AG04450 (cell line): ENCODE measurements at regions of chr4 and their contacts with region 1.

Region 1: DNA sequence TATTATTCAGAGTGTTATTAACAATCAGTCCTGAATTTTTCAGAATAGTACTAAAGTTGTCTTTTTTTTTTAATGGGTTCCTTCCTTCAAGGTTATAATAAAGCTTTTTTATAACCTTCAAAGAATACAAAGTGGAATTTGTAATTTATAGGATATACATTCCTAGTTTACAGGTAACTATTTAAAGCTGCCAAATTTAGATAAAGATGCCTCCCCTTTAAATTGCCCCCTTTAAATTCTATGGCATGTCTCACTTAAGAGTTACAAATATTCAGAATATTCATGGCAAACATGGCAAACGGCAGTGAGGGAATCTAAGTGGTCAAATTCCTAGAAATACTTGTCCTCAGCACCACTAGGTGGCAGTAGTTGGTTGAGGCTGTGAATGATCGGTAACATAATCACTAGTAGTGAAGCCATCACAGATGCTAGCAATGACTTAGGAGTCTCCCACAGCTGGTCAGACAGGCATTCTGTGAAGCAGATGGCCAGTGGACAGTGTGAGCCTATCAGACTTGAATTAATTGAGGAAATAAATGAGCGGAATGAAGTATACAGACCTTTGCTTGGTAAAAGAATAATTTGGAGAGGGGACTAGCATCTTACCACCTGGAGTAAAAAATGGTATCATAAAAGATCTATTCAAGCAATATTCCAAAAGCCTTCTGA is 86.4 kb downstream of the CBR4 start:
- DNase-seq: peak; percentile 76
- H3K4me3 ChIP-seq: no peak overlapping the region
- H3K27ac ChIP-seq: no peak overlapping the region
- H3K27me3 ChIP-seq: no peaks in the 10 kb centered on the region
- CTCF ChIP-seq: peak; percentile 87

Region 2: GRCh38 chr4:168585168-168586091 is 338.2 kb before region 1 on chr4:
- CTCF ChIA-PET with region 1: interaction called, 45 read pairs
- POLR2A ChIA-PET with region 1: no interaction called
- DNase-seq: peak; percentile 52
- H3K4me3 ChIP-seq: no peak overlapping the region
- H3K27ac ChIP-seq: no peak overlapping the region
- H3K27me3 ChIP-seq: no peaks in the 10 kb centered on the region
- CTCF ChIP-seq: peak; percentile 85

Region 3: GRCh38 chr4:168666531-168666930 is 257.1 kb before region 1 on chr4:
- CTCF ChIA-PET with region 1: no interaction called
- POLR2A ChIA-PET with region 1: no interaction called
- DNase-seq: no peak
- H3K4me3 ChIP-seq: no peak overlapping the region
- H3K27ac ChIP-seq: no peak overlapping the region
- H3K27me3 ChIP-seq: no peaks in the 10 kb centered on the region
- CTCF ChIP-seq: no peak

Region 4: GRCh38 chr4:168710353-168710946 is 213.2 kb before region 1 on chr4:
- CTCF ChIA-PET with region 1: interaction called, 47 read pairs
- POLR2A ChIA-PET with region 1: interaction called, 4 read pairs
- DNase-seq: peak; percentile 39
- H3K4me3 ChIP-seq: no peak overlapping the region
- H3K27ac ChIP-seq: no peak overlapping the region
- H3K27me3 ChIP-seq: no peaks in the 10 kb centered on the region
- CTCF ChIP-seq: peak; percentile 66

Region 5: DNA sequence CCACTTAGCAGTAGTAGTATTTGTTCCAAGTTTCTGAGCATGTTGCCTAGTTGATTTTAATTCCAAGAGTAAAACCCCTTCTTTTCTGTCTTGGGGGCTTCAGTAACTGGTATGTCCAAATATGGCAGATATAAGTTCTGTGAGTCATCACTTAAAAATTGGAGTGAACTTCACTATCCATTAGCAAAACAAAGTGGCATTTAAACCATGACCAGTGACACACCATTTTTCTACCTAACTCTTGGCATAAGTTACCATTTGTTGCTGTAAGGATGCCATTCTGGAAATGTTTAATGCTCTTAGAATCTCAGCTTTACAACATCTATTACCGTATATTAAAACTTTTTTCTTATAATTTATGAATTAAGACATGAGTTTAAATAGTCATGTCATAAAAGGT is 15.6 kb before region 1 on chr4:
- CTCF ChIA-PET with region 1: interaction called, 74 read pairs
- POLR2A ChIA-PET with region 1: no interaction called
- DNase-seq: no peak
- H3K4me3 ChIP-seq: no peak overlapping the region
- H3K27ac ChIP-seq: no peak overlapping the region
- H3K27me3 ChIP-seq: no peaks in the 10 kb centered on the region
- CTCF ChIP-seq: no peak

Region 6: DNA sequence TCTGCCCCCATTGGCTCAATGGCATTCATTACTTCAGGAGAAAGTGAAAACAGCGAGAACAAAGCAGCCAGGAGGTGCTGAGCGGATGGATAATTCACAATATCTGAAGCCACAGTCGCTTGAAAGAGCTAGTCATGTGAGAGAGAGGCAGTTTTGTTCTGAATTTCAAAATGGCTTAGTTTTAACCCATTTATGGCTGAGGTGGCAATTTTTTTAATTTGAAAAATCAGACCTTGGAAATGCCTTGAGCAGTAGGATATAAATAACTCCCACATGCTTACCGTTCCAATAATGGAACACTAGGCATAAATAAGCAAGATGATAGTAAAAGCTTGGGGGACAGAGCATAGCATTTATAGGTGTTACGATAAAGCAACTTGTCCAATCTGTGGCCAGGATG is 143.3 kb after region 1 on chr4:
- CTCF ChIA-PET with region 1: no interaction called
- POLR2A ChIA-PET with region 1: no interaction called
- DNase-seq: no peak
- H3K4me3 ChIP-seq: no peak overlapping the region
- H3K27ac ChIP-seq: no peak overlapping the region
- H3K27me3 ChIP-seq: no peaks in the 10 kb centered on the region
- CTCF ChIP-seq: no peak

Region 7: GRCh38 chr4:169485791-169486742 is 562.4 kb after region 1 on chr4:
- CTCF ChIA-PET with region 1: interaction called, 14 read pairs
- POLR2A ChIA-PET with region 1: no interaction called
- DNase-seq: no peak
- H3K4me3 ChIP-seq: no peak overlapping the region
- H3K27ac ChIP-seq: no peak overlapping the region
- H3K27me3 ChIP-seq: no peaks in the 10 kb centered on the region
- CTCF ChIP-seq: peak; percentile 57